ENCODE measurements at regions of chr13 and their contacts with region 1.

Region 1: GRCh38 chr13:97221989-97222700 is at the start of gene MBNL2:
- DNase-seq: peak; percentile 89 to 95 (median 90)
- ATAC-seq: peak; percentile 93
- H3K4me3 ChIP-seq: peak within 1 kb of the TSS; percentile 20
- H3K4me1 ChIP-seq: peaks cover 30% of the 10 kb centered on the region
- CTCF ChIP-seq: no peak
- total RNA-seq, gene MBNL2: 41.0 to 75.1 (median 47.2) TPM

Region 2: DNA sequence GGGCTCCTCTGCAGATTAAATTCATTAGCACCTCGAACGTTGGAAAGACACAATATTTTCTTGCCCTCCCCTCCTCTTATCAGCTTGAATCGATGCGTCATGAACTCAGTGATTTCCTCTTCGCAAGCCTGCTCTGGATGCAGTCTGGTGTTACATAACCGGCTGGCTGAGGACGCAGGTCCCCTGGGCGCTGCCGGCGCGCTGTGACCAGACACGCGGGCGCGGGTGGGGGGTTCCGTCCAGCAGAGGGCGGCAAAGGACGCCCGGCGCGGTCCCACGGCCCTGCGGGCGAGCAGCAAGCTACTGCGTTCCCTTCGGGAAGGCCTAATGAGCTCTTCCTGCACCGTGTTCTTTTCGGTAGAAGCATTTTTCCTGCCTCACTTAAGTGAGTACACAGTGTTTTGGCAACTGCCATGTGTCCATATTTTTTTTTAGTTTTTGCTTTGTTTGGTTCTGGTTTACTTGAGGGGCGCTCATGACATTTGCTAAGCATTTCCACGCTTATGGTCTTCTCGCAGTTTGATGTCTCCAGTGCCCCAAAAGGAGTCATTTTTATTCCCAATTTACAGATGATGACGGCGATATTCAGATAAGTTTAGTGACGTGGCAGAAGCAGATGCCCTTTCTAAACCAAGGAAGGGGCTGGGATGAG is 112.2 kb before region 1 on chr13:
- intact Hi-C with region 1: loop called (anchors 2 to 5 kb)
- DNase-seq: peak; percentile 86 to 94 (median 91)
- ATAC-seq: peak; percentile 99
- H3K4me3 ChIP-seq: no peak overlapping the region
- H3K4me1 ChIP-seq: peaks cover 13% of the 10 kb centered on the region
- CTCF ChIP-seq: peak; percentile 89

Region 3: GRCh38 chr13:97124916-97125809 is 97.0 kb before region 1 on chr13:
- intact Hi-C with region 1: loop called in 1 of 2 experiments (anchors 5 kb)
- DNase-seq: peak in 1 of 3 donors; percentile 39
- ATAC-seq: peak; percentile 52
- H3K4me3 ChIP-seq: no peak overlapping the region
- H3K4me1 ChIP-seq: peaks cover 3% of the 10 kb centered on the region
- CTCF ChIP-seq: no peak

Region 4: DNA sequence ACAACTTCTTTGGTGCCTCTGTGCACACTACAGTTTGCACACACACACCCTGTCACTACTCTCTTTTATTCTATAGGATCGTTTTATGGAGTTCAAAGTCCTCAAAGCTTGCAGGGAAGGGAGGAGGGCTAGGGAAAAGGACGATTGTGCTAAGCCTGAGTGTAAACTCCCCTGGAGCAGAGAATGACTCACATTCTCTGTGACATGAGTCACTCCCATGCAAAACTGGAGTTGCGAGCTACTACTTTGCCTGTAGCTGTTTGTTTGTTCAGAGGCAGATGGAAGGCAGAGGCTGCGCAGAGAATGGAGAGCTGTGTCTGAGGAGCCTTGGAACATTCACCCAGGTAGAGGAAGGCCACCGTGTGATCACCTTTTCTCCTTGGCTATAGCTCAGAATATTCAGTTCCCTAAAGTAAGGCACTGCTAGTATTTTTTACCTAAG is 80.6 kb before region 1 on chr13:
- intact Hi-C with region 1: loop called in 1 of 2 experiments (anchors 5 kb)
- DNase-seq: peak; percentile 53 to 90 (median 76)
- ATAC-seq: peak; percentile 97
- H3K4me3 ChIP-seq: peak overlapping the region; percentile 7
- H3K4me1 ChIP-seq: peaks cover 16% of the 10 kb centered on the region
- CTCF ChIP-seq: no peak

Region 5: DNA sequence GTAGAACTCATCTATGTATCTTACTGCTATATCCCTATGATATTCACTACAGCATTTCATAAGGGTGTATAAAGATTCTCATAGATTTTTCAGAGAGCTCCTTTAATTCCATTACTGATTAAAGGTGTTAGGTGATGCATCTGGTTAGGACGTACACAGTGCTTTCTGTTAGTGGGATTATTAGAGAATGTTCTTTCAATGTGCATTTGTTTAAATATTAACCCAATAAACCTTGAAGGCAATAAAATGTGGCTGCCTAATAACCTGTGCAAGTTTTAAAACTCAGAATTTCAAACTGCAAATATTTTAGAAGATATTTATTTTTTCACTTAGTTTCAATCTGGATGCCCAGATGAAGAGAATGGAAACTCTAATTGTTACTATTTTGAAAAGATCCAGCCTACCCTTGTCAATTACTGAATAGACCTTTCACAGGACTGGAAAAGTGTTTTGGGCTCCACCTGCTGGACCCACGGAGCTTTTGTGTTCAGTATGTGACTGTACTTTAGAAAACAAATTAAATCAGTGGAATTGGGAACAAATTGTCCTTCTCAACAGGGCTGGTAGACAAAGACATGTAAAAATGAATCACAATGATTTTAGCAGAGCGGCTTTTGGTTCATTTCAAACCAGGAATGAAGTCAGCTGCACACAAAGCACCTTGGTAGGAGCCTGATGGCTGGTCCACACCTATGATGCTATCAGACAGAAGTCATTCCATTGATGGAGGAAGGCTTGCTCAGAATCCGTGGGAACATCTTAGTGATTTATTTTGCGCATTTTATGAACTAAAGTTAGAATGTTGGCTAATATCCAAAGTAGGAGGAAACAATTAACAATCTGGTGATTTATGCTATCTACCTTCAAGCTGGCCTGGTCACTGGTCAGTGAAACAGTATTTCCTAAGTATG is 122.4 kb after region 1 on chr13:
- intact Hi-C with region 1: loop called (anchors 5 to 10 kb)
- DNase-seq: peak in 2 of 3 donors; percentile 61 to 79
- ATAC-seq: peak; percentile 69
- H3K4me3 ChIP-seq: no peak overlapping the region
- H3K4me1 ChIP-seq: peaks cover 12% of the 10 kb centered on the region
- CTCF ChIP-seq: no peak

Measured in mucosa of descending colon (tissue), 3 donors.